Calu3 (cell line): ENCODE measurements at regions of chr4 and their contacts with region 1.

Region 1: GRCh38 chr4:14513471-14513870 is 488.8 kb upstream of the CPEB2 start:
- DNase-seq: no peak
- H3K4me3 Mint-ChIP-seq: no peak overlapping the region
- H3K27ac Mint-ChIP-seq: no peak overlapping the region
- H3K4me1 Mint-ChIP-seq: no peaks in the 10 kb centered on the region
- H3K27me3 Mint-ChIP-seq: no peaks in the 10 kb centered on the region
- CTCF ChIP-seq: no peak

Region 2: DNA sequence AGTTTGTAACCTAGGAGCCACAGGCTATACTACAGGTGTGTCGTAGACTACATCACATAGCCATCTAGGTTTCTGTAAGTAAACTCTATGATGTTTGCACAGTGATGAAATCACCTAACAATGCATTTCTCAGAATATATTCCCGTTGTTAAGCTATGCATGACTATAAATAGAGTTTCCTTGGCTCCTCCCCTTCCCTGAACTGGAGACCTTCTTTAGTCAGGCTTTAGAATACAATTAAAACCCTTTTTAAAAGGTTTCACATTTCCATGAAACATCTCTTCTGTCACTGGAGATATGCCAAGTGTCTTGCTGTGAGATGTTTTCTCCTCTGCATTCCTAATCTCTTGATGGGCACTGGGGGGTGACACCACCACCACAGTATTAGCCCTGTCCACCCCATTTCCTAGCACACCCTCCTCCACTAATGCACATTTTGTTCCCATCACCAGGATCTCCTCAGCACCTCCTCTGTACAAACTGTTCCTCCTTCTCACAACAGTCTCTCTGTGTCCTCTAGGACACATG is 154.2 kb after region 1 on chr4:
- CTCF ChIA-PET with region 1: no interaction called
- intact Hi-C with region 1: no loop called
- DNase-seq: no peak
- H3K4me3 Mint-ChIP-seq: no peak overlapping the region
- H3K27ac Mint-ChIP-seq: no peak overlapping the region
- H3K4me1 Mint-ChIP-seq: peaks cover 8% of the 10 kb centered on the region
- H3K27me3 Mint-ChIP-seq: no peaks in the 10 kb centered on the region
- CTCF ChIP-seq: no peak

Region 3: GRCh38 chr4:14749910-14750309 is 236.4 kb after region 1 on chr4:
- CTCF ChIA-PET with region 1: no interaction called
- intact Hi-C with region 1: loop called (anchors 5 kb)
- DNase-seq: peak; percentile 7
- H3K4me3 Mint-ChIP-seq: no peak overlapping the region
- H3K27ac Mint-ChIP-seq: no peak overlapping the region
- H3K4me1 Mint-ChIP-seq: no peaks in the 10 kb centered on the region
- H3K27me3 Mint-ChIP-seq: peaks cover 11% of the 10 kb centered on the region
- CTCF ChIP-seq: no peak

Region 4: DNA sequence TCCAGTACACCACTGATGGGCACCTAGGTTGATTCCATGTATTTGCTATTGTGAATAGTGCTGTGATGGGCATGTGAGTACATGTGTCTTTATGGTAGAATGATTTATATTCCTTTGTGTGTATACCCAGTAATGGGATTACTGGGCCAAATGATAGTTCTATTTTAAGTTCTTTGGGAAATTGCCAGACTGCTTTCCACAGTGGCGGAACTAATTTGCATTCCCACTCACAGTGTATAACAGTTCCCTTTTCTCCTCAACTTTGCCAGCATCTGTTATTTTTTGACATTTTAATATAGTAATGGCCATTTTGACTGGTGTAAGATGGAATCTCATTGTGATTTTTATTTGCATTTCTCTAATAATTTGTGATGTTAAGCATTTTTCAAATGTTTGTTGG is 982.1 kb after region 1 on chr4:
- CTCF ChIA-PET with region 1: no interaction called
- intact Hi-C with region 1: no loop called
- DNase-seq: no peak
- H3K4me3 Mint-ChIP-seq: no peak overlapping the region
- H3K27ac Mint-ChIP-seq: no peak overlapping the region
- H3K4me1 Mint-ChIP-seq: peaks cover 7% of the 10 kb centered on the region
- H3K27me3 Mint-ChIP-seq: no peaks in the 10 kb centered on the region
- CTCF ChIP-seq: no peak